ENCODE measurements at regions of chr6 and their contacts with region 1.

Region 1: DNA sequence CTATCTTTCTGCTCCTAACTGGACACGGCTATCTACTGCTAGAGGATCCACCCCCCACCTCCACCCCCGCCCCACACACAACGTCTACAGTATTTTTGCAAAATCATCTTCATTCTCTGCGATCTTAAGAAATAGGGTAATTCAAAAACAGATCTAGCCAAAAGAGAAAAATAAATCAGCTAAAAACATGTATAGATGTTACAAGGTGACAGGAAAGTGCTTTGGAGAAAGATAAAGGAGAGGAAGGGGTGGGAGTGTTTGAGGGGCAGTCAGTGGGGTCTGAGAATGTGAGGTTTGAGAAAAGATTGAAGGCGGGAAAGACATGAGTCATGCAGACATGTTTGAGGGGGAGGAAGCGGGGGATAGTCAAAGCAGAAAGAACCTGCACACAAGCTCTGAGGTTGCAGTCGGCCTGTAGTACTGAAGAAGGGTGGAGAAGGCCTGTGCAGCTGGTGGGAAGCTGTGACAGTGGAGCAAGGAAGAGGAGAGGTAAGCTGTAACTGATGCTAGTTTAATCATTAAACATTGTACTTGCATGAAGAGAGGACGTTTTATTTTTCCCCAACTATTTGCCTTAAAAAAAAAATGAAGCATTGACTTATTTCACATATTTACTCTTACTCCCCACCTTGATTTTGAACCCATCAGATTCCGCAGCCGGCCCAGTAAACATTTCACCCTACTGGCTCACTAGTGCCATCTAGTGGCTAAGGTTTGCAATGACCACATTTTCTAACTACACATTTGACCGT is 332.6 kb downstream of the ADGRB3 start:
- DNase-seq: peak; percentile 67
- H3K4me3 ChIP-seq: no peak overlapping the region
- H3K27ac ChIP-seq: no peak overlapping the region
- H3K4me1 ChIP-seq: no peaks in the 10 kb centered on the region
- H3K27me3 ChIP-seq: no peaks in the 10 kb centered on the region
- CTCF ChIP-seq: peak; percentile 79

Region 2: DNA sequence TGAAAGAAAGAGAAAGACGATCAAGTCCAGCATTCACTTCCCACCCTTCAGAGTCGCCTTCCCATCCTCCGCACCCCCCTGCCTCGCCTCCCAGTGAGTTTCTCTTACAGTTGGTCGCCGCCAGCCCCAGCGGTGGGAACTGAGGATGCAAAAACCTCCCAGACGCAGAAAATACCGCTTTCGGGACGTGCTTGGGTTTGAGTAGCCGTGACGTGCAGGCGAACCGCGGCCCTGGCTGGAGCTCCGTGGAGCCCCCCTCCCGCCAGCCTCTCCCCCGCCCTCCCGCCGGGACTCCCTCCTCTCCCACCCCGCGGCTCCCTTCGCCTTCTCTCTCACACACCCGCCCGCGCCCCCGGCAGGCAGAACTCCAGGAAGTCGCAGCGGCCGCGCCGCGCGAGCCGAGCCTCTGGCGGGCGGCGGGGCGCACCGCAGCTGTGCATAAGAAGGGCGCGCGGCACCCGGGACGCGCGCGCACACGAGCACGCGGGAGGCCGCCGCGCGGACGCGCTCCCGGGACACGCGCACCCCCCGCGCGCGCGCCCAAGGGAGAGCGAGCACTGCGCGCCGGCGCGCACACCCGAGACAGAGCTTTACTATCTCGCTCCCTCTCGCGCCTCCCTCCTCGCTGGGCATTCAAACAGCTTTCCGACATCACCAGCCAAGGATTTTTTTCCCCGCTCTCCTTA is 332.9 kb before region 1 on chr6 and contains the start of gene ADGRB3:
- intact Hi-C with region 1: loop called (anchors 10 kb)
- DNase-seq: peak; percentile 62
- H3K4me3 ChIP-seq: peak within 1 kb of the TSS; percentile 38
- H3K27ac ChIP-seq: no peak within 1 kb of the TSS
- H3K4me1 ChIP-seq: no peaks in the 10 kb centered on the region
- H3K27me3 ChIP-seq: peaks cover 7% of the 10 kb centered on the region
- CTCF ChIP-seq: no peak
- total RNA-seq, gene ADGRB3: 0.42 to 0.98 TPM

Measured in colonic mucosa (tissue), 4 donors.